Activated CD4-positive, alpha-beta memory T cell treated with anti-CD3 and anti-CD28 coated beads for 36 hours (primary cell): ENCODE measurements at regions of chr13 and their contacts with region 1.

Region 1: DNA sequence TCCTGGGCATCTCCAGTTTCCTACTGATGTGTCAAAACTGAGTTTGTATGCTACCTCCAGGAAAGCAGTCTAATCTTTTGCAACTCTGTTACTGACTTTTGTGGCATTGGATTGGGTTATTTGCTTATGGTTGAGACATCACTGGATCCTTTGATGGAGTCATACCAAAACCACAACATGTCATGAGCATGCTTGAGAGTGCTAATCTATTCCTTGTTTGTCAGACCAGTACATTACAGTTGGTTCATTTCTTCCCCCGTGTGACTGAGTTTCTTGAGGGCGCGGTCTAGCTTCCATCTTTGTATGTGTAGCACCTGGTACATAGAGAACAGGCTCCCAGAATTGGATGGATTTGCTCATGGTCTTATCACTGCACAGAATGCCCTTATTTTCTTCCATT is 43.2 kb downstream of the SUGT1 start:
- DNase-seq: peak; percentile 71
- H3K4me3 Mint-ChIP-seq: no peak overlapping the region
- H3K27ac Mint-ChIP-seq: peak overlapping the region; percentile 31
- H3K4me1 Mint-ChIP-seq: peaks cover 15% of the 10 kb centered on the region
- H3K27me3 Mint-ChIP-seq: no peaks in the 10 kb centered on the region

Region 2: GRCh38 chr13:52348983-52349780 is 346.7 kb before region 1 on chr13:
- CTCF ChIA-PET with region 1: no interaction called
- POLR2A ChIA-PET with region 1: no interaction called
- intact Hi-C with region 1: loop called (anchors 5 kb)
- DNase-seq: peak; percentile 39
- H3K4me3 Mint-ChIP-seq: no peak overlapping the region
- H3K27ac Mint-ChIP-seq: no peak overlapping the region
- H3K4me1 Mint-ChIP-seq: peaks cover 2% of the 10 kb centered on the region
- H3K27me3 Mint-ChIP-seq: peaks cover 16% of the 10 kb centered on the region

Region 3: GRCh38 chr13:52677823-52678222 is 18.0 kb before region 1 on chr13:
- CTCF ChIA-PET with region 1: no interaction called
- POLR2A ChIA-PET with region 1: no interaction called
- intact Hi-C with region 1: loop called (anchors 1 kb)
- DNase-seq: no peak
- H3K4me3 Mint-ChIP-seq: no peak overlapping the region
- H3K27ac Mint-ChIP-seq: no peak overlapping the region
- H3K4me1 Mint-ChIP-seq: no peaks in the 10 kb centered on the region
- H3K27me3 Mint-ChIP-seq: no peaks in the 10 kb centered on the region